Common myeloid progenitor, CD34-positive (primary cell): ENCODE measurements at regions of chr16 and their contacts with region 1.

Region 1: DNA sequence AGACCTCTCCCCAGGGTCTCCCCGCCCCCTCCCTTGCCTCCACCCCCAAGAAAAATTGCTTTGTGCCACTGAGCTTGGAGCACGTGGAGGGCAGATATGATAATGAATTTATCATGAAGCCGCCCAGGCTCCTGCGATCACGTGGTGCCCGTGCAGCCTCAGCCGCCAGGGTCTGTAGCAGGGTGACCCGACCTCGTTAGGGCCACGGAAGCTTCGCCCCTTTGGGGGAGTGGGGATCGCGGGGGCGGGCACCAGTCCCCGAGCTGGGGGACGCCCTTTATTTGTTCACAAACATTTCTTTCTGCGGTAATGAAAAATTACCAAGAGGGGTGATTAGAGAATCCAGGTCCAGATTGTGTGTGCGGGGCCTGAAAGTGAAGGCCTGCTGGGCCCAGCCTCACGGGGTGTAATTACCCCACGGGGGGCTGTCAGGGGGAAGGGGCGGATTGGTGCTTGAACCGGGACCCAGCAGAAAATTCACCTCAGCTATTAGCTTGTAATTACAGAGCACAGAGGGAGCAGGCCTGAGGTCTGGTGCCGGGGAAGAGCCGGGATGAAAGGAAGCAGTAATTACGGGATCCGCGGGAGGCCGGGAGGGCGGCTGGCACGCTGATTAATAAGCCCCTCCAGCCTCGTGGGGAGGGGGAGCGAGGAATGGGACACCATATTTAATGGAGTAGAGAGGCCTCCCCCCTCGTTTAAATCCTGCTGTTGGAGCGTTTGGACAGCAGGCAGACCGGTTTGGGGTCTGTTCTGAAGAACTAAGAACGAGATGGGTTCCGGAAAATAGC is 13.3 kb downstream of the GSE1 start:
- DNase-seq: no peak
- H3K4me3 ChIP-seq: peak overlapping the region in 2 of 7 experiments; percentile 19 to 28
- H3K27ac ChIP-seq: peak overlapping the region in 1 of 2 experiments; percentile 58
- H3K4me1 ChIP-seq: peaks cover 0 to 59% (median 29%) of the 10 kb centered on the region in 4 experiments
- H3K27me3 ChIP-seq: no peaks in the 10 kb centered on the region

Region 2: GRCh38 chr16:85615852-85616606 is 10.4 kb before region 1 on chr16:
- CTCF ChIA-PET with region 1: interaction called, 65 read pairs
- POLR2A ChIA-PET with region 1: interaction called, 7 read pairs
- DNase-seq: peak; percentile 95 to 98 (median 98)
- H3K4me3 ChIP-seq: peak overlapping the region; percentile 34 to 85 (median 74)
- H3K27ac ChIP-seq: peak overlapping the region; percentile 42 to 87
- H3K4me1 ChIP-seq: peaks cover 5 to 64% (median 50%) of the 10 kb centered on the region in 4 experiments
- H3K27me3 ChIP-seq: no peaks in the 10 kb centered on the region

Region 3: DNA sequence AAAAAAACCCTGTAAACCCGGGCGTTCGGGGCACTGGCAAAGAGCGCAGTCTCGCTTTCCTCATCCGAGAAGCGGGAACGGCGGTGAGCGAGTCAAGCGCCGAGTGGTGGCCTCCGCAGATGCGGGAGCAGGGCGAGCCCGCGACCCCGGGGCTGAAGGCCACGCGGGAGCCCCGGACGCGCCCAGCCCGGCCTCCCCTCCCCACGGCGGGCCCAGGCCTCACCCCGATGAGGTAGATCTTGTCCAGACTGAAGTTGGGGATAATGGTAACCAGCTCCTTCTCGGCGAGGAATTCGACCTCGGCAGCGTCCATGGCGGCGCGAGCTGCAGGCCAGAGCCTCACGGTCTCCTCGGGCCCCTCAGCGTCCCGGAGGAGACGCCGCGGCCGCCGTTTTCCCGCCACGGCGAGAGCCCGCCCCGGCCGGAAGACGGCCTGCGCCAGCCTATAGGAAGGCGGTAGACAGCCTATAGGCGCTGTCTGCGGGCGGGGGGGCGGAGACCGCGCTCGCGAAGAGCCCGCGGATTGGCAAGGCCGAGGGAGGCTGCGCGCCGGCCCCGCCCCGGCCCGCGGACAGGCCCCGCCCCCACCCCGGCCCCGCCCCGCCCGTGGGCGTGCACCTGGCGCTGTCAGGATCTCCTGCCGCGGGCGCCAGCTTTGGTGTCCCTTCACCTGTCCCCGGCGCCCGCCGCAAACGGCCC is 62.3 kb after region 1 on chr16 and contains the start of gene GINS2:
- CTCF ChIA-PET with region 1: no interaction called
- POLR2A ChIA-PET with region 1: no interaction called
- DNase-seq: peak; percentile 88 to 94 (median 93)
- H3K4me3 ChIP-seq: peak within 1 kb of the TSS; percentile 40 to 89 (median 75)
- H3K27ac ChIP-seq: peak within 1 kb of the TSS in 1 of 2 experiments; percentile 14
- H3K4me1 ChIP-seq: peaks cover 0 to 22% (median 17%) of the 10 kb centered on the region in 4 experiments
- H3K27me3 ChIP-seq: no peaks in the 10 kb centered on the region

Region 4: GRCh38 chr16:85781695-85782370 is 155.4 kb after region 1 on chr16:
- CTCF ChIA-PET with region 1: no interaction called
- POLR2A ChIA-PET with region 1: no interaction called
- DNase-seq: no peak
- H3K4me3 ChIP-seq: no peak overlapping the region
- H3K27ac ChIP-seq: no peak overlapping the region
- H3K4me1 ChIP-seq: no peaks in the 10 kb centered on the region
- H3K27me3 ChIP-seq: no peaks in the 10 kb centered on the region